ENCODE measurements at regions of chr5 and their contacts with region 1.

Region 1: DNA sequence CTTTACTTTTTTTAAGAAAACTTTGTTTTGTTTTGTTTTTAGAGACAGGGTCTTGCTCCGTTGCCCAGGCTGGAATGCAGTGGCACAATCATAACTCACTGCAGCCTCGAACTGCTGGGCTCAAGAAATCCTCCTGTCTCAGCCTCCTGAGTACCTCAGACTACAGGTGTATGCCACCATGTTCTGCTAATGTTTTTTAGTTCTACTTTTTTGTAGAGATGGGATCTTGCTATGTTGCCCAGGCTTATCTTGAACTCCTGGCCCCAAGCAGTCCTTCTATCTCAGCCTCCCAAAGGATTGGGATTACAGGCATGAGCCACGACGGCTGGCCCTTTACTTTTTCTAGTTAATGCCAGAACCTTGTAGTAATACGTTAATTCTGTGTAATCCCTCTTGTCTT is 36.0 kb downstream of the IPO11 start:
- DNase-seq: no peak
- ATAC-seq: no peak
- H3K4me3 ChIP-seq: no peak overlapping the region
- H3K4me3 Mint-ChIP-seq: no peak overlapping the region
- H3K27ac ChIP-seq: no peak overlapping the region
- H3K27ac Mint-ChIP-seq: no peak overlapping the region
- H3K4me1 ChIP-seq: no peaks in the 10 kb centered on the region
- H3K4me1 Mint-ChIP-seq: peaks cover 0 to 3% (median 0%) of the 10 kb centered on the region in 7 donors
- H3K27me3 ChIP-seq: no peaks in the 10 kb centered on the region
- H3K27me3 Mint-ChIP-seq: no peaks in the 10 kb centered on the region

Region 2: DNA sequence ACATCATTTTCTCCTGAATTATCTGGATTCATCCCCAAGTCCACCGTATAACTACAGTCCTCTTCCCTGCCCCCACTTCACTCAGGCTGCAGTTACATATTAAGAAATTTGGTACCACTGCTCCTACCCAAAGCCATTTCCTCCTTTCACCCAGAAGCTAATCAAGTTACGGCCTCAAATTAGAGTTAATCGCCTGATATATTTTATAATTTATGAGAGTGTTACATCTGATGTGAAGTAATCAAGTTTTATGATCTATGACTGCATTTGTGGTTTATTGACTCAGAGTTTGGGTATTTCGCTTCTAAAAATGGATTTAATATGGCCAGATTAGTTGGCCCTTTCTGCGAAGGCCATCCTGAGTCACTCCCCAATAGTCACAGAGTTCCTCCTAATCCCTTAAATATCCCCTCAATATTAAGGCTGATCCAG is 366.1 kb before region 1 on chr5:
- CTCF ChIA-PET with region 1: no interaction called
- POLR2A ChIA-PET with region 1: no interaction called
- intact Hi-C with region 1: no loop called
- DNase-seq: no peak
- ATAC-seq: no peak
- H3K4me3 ChIP-seq: no peak overlapping the region
- H3K4me3 Mint-ChIP-seq: no peak overlapping the region
- H3K27ac ChIP-seq: no peak overlapping the region
- H3K27ac Mint-ChIP-seq: no peak overlapping the region
- H3K4me1 ChIP-seq: no peaks in the 10 kb centered on the region
- H3K4me1 Mint-ChIP-seq: peaks cover 0 to 13% (median 11%) of the 10 kb centered on the region in 7 donors
- H3K27me3 ChIP-seq: no peaks in the 10 kb centered on the region
- H3K27me3 Mint-ChIP-seq: peaks cover 0 to 9% (median 6%) of the 10 kb centered on the region in 5 donors

Region 3: GRCh38 chr5:62152394-62153087 is 296.0 kb before region 1 on chr5:
- CTCF ChIA-PET with region 1: no interaction called
- POLR2A ChIA-PET with region 1: no interaction called
- intact Hi-C with region 1: no loop called
- DNase-seq: no peak
- ATAC-seq: no peak
- H3K4me3 ChIP-seq: no peak overlapping the region
- H3K4me3 Mint-ChIP-seq: no peak overlapping the region
- H3K27ac ChIP-seq: no peak overlapping the region
- H3K27ac Mint-ChIP-seq: no peak overlapping the region
- H3K4me1 ChIP-seq: no peaks in the 10 kb centered on the region
- H3K4me1 Mint-ChIP-seq: no peaks in the 10 kb centered on the region
- H3K27me3 ChIP-seq: no peaks in the 10 kb centered on the region
- H3K27me3 Mint-ChIP-seq: peaks cover 0 to 37% (median 21%) of the 10 kb centered on the region in 5 donors

Region 4: DNA sequence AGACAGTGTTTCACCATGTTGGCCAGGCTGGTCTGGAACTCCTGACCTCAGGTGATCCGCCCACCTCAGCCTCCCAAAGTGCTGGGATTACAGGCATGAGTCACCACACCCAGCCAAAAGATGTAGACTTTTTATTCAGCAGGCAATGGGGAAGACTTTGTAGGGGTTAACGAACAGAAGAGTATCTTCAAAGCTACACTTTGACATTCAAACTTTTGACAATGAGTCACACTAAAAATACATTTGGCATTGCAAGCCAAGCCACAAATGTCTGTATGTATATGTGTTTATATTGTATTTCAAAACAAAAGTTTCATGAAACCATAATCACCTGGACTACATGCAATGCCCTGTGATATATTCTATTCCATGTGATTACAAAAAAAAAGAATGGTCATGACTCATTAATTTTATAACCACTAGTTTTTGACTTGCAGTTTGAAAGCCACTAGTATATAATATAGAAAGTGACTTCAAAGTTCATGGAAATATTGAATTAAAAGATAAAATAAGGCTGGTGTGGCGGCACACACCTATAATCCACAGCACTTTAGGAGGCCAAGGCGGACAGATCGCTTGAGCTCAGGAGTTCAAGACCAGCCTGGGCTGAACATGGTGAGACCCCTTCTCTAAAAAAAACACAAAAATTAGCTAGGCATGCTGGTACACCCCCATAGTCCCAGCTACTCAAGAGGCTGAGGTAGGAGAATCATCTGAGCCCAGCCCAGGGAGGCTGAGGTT is 53.1 kb before region 1 on chr5:
- CTCF ChIA-PET with region 1: no interaction called
- POLR2A ChIA-PET with region 1: no interaction called
- intact Hi-C with region 1: no loop called
- DNase-seq: no peak
- ATAC-seq: no peak
- H3K4me3 ChIP-seq: no peak overlapping the region
- H3K4me3 Mint-ChIP-seq: no peak overlapping the region
- H3K27ac ChIP-seq: no peak overlapping the region
- H3K27ac Mint-ChIP-seq: peak overlapping the region in 4 of 9 donors; percentile 48 to 71 (median 53)
- H3K4me1 ChIP-seq: no peaks in the 10 kb centered on the region
- H3K4me1 Mint-ChIP-seq: peaks cover 4 to 27% (median 6%) of the 10 kb centered on the region in 7 donors
- H3K27me3 ChIP-seq: no peaks in the 10 kb centered on the region
- H3K27me3 Mint-ChIP-seq: no peaks in the 10 kb centered on the region

Region 5: DNA sequence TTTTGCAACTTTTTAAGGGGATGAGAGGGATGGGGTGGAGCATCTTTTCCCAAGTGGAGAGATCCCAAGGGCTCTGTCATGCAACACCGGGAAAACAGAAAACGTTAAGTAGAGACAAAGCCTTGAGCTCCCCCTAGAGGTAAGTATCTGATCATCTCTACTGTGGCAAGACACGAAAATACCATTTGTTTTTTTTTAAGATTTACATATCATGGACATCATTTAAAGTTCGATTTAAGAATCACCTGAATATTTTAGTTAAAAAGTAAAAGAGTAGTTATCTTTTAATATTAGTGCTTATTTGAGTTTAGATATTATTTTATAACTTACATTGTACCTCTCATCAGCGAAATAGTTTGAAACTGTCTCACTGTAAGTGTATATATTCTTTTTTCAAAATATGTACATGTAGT is 330.5 kb after region 1 on chr5:
- CTCF ChIA-PET with region 1: interaction called, 3 read pairs
- POLR2A ChIA-PET with region 1: no interaction called
- intact Hi-C with region 1: loop called (anchors 1 kb)
- DNase-seq: peak in 6 of 9 donors; percentile 2 to 36 (median 26)
- ATAC-seq: peak; percentile 61
- H3K4me3 ChIP-seq: no peak overlapping the region
- H3K4me3 Mint-ChIP-seq: peak overlapping the region in 3 of 10 donors; percentile 19 to 59 (median 40)
- H3K27ac ChIP-seq: no peak overlapping the region
- H3K27ac Mint-ChIP-seq: no peak overlapping the region
- H3K4me1 ChIP-seq: no peaks in the 10 kb centered on the region
- H3K4me1 Mint-ChIP-seq: peaks cover 0 to 16% (median 0%) of the 10 kb centered on the region in 7 donors
- H3K27me3 ChIP-seq: no peaks in the 10 kb centered on the region
- H3K27me3 Mint-ChIP-seq: peaks cover 0 to 7% (median 0%) of the 10 kb centered on the region in 5 donors

Region 6: GRCh38 chr5:63963080-63963735 is 1514.7 kb after region 1 on chr5:
- CTCF ChIA-PET with region 1: no interaction called
- POLR2A ChIA-PET with region 1: no interaction called
- intact Hi-C with region 1: loop called in 1 of 2 experiments (anchors 5 kb)
- DNase-seq: peak in 2 of 9 donors; percentile 1 to 23
- ATAC-seq: no peak
- H3K4me3 ChIP-seq: no peak overlapping the region
- H3K4me3 Mint-ChIP-seq: no peak overlapping the region
- H3K27ac ChIP-seq: no peak overlapping the region
- H3K27ac Mint-ChIP-seq: no peak overlapping the region
- H3K4me1 ChIP-seq: no peaks in the 10 kb centered on the region
- H3K4me1 Mint-ChIP-seq: peaks cover 0 to 2% (median 0%) of the 10 kb centered on the region in 7 donors
- H3K27me3 ChIP-seq: peaks cover 0 to 3% of the 10 kb centered on the region in 2 donors
- H3K27me3 Mint-ChIP-seq: peaks cover 31 to 46% (median 39%) of the 10 kb centered on the region in 5 donors

Measured in naive thymus-derived CD4-positive, alpha-beta T cell (primary cell).